SK-N-SH (cell line): ENCODE measurements at regions of chr10 and their contacts with region 1.

Region 1: GRCh38 chr10:100518761-100519241 is 860 bp downstream of the SEC31B start:
- DNase-seq: peak; percentile 71
- H3K4me3 ChIP-seq: peak overlapping the region in 1 of 2 experiments; percentile 30; a peak in 2 of 4 replicates
- H3K27ac ChIP-seq: no peak overlapping the region
- H3K4me1 ChIP-seq: peaks cover 5 to 8% of the 10 kb centered on the region in 2 experiments; a peak in 3 of 4 replicates
- H3K27me3 ChIP-seq: no peaks in the 10 kb centered on the region
- CTCF ChIP-seq: peak; percentile 85
- EP300 ChIP-seq: no peak
- RAD21 ChIP-seq: peak; percentile 75

Region 2: GRCh38 chr10:100327007-100327717 is 191.6 kb before region 1 on chr10:
- CTCF ChIA-PET with region 1: interaction called, 126 read pairs
- POLR2A ChIA-PET with region 1: no interaction called
- DNase-seq: no peak
- H3K4me3 ChIP-seq: no peak overlapping the region
- H3K27ac ChIP-seq: no peak overlapping the region
- H3K4me1 ChIP-seq: no peaks in the 10 kb centered on the region
- H3K27me3 ChIP-seq: peaks cover 39% of the 10 kb centered on the region
- CTCF ChIP-seq: no peak
- EP300 ChIP-seq: no peak
- RAD21 ChIP-seq: no peak

Region 3: GRCh38 chr10:100433253-100434240 is 85.3 kb before region 1 on chr10:
- CTCF ChIA-PET with region 1: interaction called, 93 read pairs
- POLR2A ChIA-PET with region 1: no interaction called
- DNase-seq: peak; percentile 77
- H3K4me3 ChIP-seq: no peak overlapping the region; a peak in 1 of 4 replicates
- H3K27ac ChIP-seq: no peak overlapping the region
- H3K4me1 ChIP-seq: no peaks in the 10 kb centered on the region
- H3K27me3 ChIP-seq: no peaks in the 10 kb centered on the region
- CTCF ChIP-seq: peak; percentile 100
- EP300 ChIP-seq: no peak
- RAD21 ChIP-seq: peak; percentile 100

Region 4: DNA sequence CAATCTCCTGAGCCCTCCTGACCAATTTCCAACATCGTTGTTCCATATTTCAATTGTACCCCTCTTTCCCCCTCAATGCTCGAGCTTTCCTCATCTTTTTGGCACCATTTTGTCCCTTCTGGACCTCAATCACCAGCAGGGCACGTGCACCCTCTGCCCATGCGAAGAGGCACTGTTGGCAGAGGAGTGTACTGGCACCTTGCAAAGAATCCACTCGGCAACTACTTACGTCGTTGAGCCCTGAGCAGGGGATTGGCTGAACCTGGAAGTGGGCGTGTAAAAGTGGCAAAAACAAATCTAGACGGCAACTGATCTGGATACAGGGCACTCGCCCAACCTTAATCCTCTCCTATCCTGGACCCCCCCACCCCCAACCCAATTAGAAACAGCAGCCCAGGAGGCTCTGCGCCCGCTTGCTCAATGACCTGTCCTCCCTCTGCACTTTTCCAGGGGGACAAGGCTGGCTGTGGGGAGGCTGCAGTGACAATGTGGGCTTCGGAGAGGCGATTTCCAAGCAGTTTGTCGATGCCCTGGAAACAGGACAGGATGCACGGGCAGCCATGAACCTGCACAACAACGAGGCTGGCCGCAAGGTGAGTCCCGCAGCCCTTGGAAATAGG is 37.2 kb before region 1 on chr10:
- CTCF ChIA-PET with region 1: interaction called, 150 read pairs
- POLR2A ChIA-PET with region 1: interaction called, 3 read pairs
- DNase-seq: peak; percentile 88
- H3K4me3 ChIP-seq: peak overlapping the region; percentile 54 to 65
- H3K27ac ChIP-seq: no peak overlapping the region
- H3K4me1 ChIP-seq: peaks cover 0 to 13% of the 10 kb centered on the region in 2 experiments; a peak in 1 of 4 replicates
- H3K27me3 ChIP-seq: peaks cover 25% of the 10 kb centered on the region; the same call in 1 of the 2 replicates
- CTCF ChIP-seq: peak; percentile 18
- EP300 ChIP-seq: no peak
- RAD21 ChIP-seq: peak; percentile 14; the same call in 1 of the 2 replicates

Region 5: DNA sequence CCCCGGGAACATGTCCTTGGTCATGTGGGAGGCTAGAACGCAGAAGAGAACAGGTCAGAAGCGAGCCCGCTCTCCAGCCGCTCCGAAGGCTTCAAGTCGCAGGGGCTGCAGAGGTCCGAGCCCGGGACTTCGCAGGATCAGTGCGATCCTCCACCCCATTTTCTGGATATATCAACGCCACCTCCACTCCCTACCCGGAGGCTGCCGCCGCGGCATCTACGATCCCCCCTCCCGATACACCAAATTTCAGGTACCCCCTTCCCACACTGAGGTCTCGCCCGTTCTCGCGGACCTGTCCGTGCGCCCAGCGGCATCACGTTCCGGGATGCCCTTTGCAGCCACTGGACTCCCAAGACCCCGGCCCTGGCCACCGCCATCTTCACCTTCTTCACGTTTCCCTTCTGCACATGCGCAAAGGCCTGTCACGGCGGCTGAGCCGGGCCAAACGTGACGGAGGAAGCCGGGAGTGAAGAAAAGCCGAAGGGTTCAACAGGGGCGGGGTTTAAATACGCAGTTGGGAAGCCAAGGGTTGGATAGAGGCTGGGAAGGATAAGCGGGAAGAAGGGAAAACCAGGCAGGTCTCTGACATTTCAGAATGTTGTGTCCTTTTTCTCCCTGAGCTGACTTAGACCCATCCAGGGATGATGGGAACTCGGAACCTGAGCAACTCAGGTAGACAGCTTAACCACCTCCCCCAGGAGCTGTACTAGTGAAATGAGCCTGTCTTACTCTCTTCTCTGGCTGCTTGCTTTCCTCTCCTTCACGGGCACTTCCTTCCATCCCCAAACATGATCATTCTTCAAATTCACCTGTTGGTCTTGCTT is 10.9 kb after region 1 on chr10 and contains the start of gene NDUFB8:
- CTCF ChIA-PET with region 1: interaction called, 51 read pairs
- POLR2A ChIA-PET with region 1: no interaction called
- DNase-seq: peak; percentile 89
- H3K4me3 ChIP-seq: peak within 1 kb of the TSS; percentile 75 to 88
- H3K27ac ChIP-seq: peak within 1 kb of the TSS; percentile 43 to 69; a peak in 2 of 4 replicates
- H3K4me1 ChIP-seq: peaks cover 6 to 11% of the 10 kb centered on the region in 2 experiments; a peak in 1 of 4 replicates
- H3K27me3 ChIP-seq: no peaks in the 10 kb centered on the region
- CTCF ChIP-seq: no peak
- EP300 ChIP-seq: no peak
- RAD21 ChIP-seq: no peak
- polyA plus RNA-seq, gene NDUFB8: 340 and 368 TPM in 2 replicates

Region 6: DNA sequence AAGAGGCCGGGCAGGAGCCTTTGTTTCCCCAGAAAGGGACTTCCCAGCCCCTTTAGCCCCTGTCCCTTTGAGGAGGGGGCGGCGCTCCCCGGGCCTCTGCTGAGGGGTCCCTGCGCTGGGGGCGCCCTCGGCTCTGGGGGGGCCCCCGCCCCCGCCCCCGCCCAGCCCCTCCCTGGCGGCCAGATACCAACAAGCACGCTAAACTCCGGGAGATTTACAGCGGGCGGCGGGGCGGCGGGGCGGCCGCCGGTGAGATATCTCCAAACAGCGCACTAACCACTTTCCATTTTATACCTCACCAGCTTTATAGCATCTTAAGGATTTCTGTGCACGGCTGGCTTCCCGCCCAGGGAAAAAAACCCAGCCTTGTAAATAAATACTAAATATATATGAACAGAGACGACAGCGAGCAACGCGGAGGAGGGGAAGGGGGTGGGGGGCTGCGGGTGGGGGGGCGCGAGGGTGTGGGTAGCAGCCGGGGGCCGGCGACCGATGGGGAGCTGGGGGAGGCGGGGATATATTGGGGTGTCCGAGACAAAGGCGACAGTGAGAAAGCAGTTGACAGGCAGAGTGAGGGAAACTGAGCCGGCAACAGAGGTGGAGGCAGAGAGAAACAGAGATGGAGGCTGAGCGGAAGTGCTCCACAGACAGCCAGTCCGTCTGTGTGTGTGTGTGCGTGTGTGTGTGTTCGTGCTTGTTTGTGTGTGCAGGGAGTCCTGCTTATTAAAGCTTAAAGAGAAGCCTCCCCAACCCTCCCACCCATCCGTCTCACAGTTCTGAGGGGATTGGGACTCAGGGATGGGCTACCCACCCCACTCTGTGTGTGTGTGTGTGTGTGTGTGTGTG is 102.8 kb after region 1 on chr10:
- CTCF ChIA-PET with region 1: no interaction called
- POLR2A ChIA-PET with region 1: no interaction called
- DNase-seq: peak; percentile 56
- H3K4me3 ChIP-seq: no peak overlapping the region; a peak in 1 of 4 replicates
- H3K27ac ChIP-seq: no peak overlapping the region
- H3K4me1 ChIP-seq: no peaks in the 10 kb centered on the region
- H3K27me3 ChIP-seq: peaks cover 37% of the 10 kb centered on the region; the same call in 1 of the 2 replicates
- CTCF ChIP-seq: no peak
- EP300 ChIP-seq: no peak
- RAD21 ChIP-seq: no peak